Activated T-helper 1 cell treated with anti-CD3 and anti-CD28 coated beads, Interleukin-12 subunit alpha, Interleukin-12 subunit beta, Interleukin-2, Interleukin-4 antibody, amounts not matched to agents 30 ng/mL and 10 ng/mL and 1 ng/mL, durations not matched to agents 14 hours and 24 hours and 36 hours (primary cell): ENCODE measurements at regions of chr18 and their contacts with region 1.

Region 1: GRCh38 chr18:24456549-24456948 is 3.9 kb upstream of the HRH4 start:
- DNase-seq: no peak
- H3K4me3 Mint-ChIP-seq: peak overlapping the region; percentile 26
- H3K27ac Mint-ChIP-seq: peak overlapping the region; percentile 55
- H3K4me1 Mint-ChIP-seq: peaks cover 28% of the 10 kb centered on the region
- H3K27me3 Mint-ChIP-seq: no peaks in the 10 kb centered on the region

Region 2: GRCh38 chr18:24475926-24476589 is 19.5 kb after region 1 on chr18:
- intact Hi-C with region 1: loop called (anchors 1 kb)
- DNase-seq: no peak
- H3K4me3 Mint-ChIP-seq: no peak overlapping the region
- H3K27ac Mint-ChIP-seq: no peak overlapping the region
- H3K4me1 Mint-ChIP-seq: no peaks in the 10 kb centered on the region
- H3K27me3 Mint-ChIP-seq: peaks cover 20% of the 10 kb centered on the region